Activated naive CD4-positive, alpha-beta T cell treated with anti-CD3 and anti-CD28 coated beads for 36 hours (primary cell): ENCODE measurements at regions of chr10 and their contacts with region 1.

Region 1: DNA sequence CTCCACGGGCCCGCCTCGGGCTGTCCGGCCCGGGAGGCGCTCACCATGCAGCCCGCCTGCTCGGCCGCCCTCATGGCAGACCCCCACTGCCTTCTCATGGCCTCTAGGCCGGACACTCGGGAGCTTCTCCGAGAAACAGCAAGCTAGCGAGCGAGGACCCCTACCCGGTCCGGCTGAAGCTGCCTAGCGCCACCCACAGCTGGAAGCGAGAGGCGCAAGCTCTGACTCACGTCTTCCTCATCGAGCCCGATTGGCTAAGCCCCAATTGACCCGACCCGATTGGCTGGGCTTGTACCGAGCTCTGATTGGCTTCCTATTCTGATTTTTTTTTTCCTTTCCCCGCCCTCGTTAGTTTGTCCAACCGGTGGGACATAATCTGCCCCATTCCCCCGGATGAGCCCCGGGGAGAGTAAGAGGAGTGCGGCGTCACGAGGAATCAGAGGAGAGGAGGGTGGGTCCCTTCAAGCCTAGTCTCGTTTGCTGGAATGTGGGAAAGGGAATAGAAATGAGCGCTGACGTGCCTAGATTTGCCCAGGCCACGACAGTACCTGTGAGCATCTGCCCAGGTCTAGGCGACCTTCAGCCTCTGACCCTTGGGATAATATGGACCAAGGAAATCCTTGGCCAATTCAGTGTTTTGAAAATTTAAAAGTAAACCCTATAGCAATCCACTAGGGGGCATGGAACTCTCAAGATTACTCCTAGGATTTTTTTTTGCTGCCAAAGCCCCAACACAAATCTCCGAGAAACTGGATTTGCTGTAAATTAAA is at the start of gene TYSND1:
- DNase-seq: peak; percentile 97
- H3K4me3 Mint-ChIP-seq: peak within 1 kb of the TSS; percentile 90
- H3K27ac Mint-ChIP-seq: peak within 1 kb of the TSS; percentile 93
- H3K4me1 Mint-ChIP-seq: peaks cover 33% of the 10 kb centered on the region
- H3K27me3 Mint-ChIP-seq: no peaks in the 10 kb centered on the region
- total RNA-seq, gene TYSND1: 12.5 to 13.0 TPM

Region 2: DNA sequence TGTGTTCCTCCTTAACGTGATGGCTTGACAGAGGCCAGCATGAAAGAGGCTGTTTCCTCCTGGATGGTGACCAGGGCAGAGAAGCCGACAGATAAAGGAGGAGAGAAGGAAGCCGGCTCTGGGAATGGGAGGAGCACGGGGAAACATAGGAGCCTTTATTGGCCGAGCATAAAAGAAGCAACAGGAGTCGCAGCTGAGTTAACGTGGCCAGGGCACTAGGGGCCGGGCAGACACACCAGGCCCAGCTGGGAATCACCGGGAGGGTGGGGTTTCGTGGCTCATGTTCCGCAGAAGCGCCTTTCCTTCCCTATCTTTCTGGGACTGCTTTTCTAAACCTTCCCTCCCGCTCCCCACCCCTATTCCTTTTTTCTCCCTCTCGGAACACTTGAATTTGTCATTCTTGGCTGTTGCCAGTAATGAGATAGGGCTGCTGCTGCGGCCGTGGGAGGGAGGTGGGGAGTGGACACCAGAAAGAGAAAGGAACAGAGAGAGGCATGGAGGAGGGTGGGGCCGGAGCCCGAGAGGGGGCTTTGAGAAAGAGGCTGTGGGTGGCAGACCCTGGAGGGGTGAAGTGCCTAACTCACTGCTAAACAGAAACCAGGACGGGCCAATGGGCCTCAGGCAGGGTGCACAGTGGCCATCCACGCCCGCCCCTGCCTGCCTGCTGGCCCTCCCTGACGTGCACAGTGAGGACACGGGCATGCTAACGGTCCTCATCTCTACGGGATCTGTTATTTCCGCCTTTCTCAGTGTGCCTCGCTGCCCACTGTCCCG is 279.8 kb before region 1 on chr10:
- CTCF ChIA-PET with region 1: no interaction called
- intact Hi-C with region 1: no loop called
- DNase-seq: no peak
- H3K4me3 Mint-ChIP-seq: no peak overlapping the region
- H3K27ac Mint-ChIP-seq: no peak overlapping the region
- H3K4me1 Mint-ChIP-seq: no peaks in the 10 kb centered on the region
- H3K27me3 Mint-ChIP-seq: no peaks in the 10 kb centered on the region

Region 3: DNA sequence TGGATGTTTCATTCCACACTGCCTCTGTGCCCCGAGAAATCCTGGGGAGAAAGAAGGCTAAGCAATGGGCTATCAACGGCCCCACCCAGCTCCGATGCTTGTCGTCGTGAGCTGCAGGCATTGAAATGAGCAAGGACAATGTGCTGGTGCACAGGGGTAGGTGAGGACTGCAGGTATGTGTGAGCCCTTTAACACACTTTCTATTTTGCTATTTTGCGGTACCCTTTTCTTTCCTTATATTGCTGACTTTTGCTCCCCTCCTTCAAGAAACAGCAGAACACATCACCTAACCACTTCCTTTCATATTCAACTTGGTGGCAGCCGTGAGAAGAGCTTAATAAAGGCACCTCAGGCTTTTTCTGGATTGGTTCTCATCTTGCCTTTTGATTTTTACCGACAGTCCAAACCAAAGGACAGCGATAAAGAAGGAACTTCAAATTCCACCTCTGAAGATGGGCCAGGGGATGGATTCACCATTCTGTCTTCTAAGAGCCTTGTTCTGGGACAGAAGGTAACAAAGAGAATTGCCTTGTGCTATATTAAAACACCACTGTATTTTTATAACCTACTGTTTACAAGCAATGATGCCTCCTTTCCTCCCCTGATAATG is 53.2 kb before region 1 on chr10:
- CTCF ChIA-PET with region 1: interaction called, 19 read pairs
- intact Hi-C with region 1: loop called (anchors 1 kb)
- DNase-seq: peak; percentile 52
- H3K4me3 Mint-ChIP-seq: peak overlapping the region; percentile 74
- H3K27ac Mint-ChIP-seq: peak overlapping the region; percentile 73
- H3K4me1 Mint-ChIP-seq: peaks cover 32% of the 10 kb centered on the region
- H3K27me3 Mint-ChIP-seq: no peaks in the 10 kb centered on the region

Region 4: GRCh38 chr10:70130878-70131559 is 15.7 kb before region 1 on chr10:
- CTCF ChIA-PET with region 1: interaction called, 12 read pairs
- intact Hi-C with region 1: no loop called
- DNase-seq: no peak
- H3K4me3 Mint-ChIP-seq: no peak overlapping the region
- H3K27ac Mint-ChIP-seq: no peak overlapping the region
- H3K4me1 Mint-ChIP-seq: peaks cover 15% of the 10 kb centered on the region
- H3K27me3 Mint-ChIP-seq: peaks cover 3% of the 10 kb centered on the region

Region 5: GRCh38 chr10:70197235-70197945 is 50.7 kb after region 1 on chr10:
- CTCF ChIA-PET with region 1: interaction called, 8 read pairs
- intact Hi-C with region 1: loop called (anchors 2 kb)
- DNase-seq: no peak
- H3K4me3 Mint-ChIP-seq: no peak overlapping the region
- H3K27ac Mint-ChIP-seq: no peak overlapping the region
- H3K4me1 Mint-ChIP-seq: peaks cover 15% of the 10 kb centered on the region
- H3K27me3 Mint-ChIP-seq: no peaks in the 10 kb centered on the region

Region 6: GRCh38 chr10:70272925-70273316 is 126.2 kb after region 1 on chr10:
- CTCF ChIA-PET with region 1: interaction called, 5 read pairs
- intact Hi-C with region 1: loop called (anchors 1 kb)
- DNase-seq: peak; percentile 35
- H3K4me3 Mint-ChIP-seq: no peak overlapping the region
- H3K27ac Mint-ChIP-seq: peak overlapping the region; percentile 56
- H3K4me1 Mint-ChIP-seq: peaks cover 22% of the 10 kb centered on the region
- H3K27me3 Mint-ChIP-seq: no peaks in the 10 kb centered on the region

Region 7: GRCh38 chr10:70404036-70404786 is 257.5 kb after region 1 on chr10 and contains the start of gene EIF4EBP2:
- CTCF ChIA-PET with region 1: no interaction called
- intact Hi-C with region 1: loop called (anchors 1 kb)
- DNase-seq: peak; percentile 99
- H3K4me3 Mint-ChIP-seq: peak within 1 kb of the TSS; percentile 98
- H3K27ac Mint-ChIP-seq: peak within 1 kb of the TSS; percentile 90
- H3K4me1 Mint-ChIP-seq: peaks cover 37% of the 10 kb centered on the region
- H3K27me3 Mint-ChIP-seq: no peaks in the 10 kb centered on the region
- total RNA-seq, gene EIF4EBP2: 20.0 to 21.0 TPM

Region 8: DNA sequence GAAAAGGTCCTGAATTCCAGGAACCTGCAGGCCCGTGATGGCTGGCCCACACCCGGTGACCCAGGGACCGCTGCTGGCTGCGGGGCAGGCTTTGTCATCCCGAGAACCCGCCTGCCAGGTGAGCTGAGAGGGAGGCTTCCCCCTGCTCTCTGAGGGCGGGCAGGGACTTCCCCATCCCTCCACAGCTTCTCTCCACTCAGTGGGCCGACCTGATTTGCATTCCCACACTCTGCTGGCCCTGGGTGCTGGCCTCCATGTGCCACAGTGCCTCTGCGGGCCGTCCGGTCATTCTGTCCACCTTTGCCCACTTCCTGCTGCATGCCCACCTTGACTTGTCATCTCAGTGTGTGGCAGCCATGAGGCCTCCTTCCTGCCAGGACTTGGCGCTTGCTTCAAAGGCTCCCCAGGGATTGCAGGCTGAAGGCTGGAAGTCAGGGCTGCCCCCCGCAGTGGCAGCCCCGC is 367.2 kb after region 1 on chr10:
- CTCF ChIA-PET with region 1: no interaction called
- intact Hi-C with region 1: no loop called
- DNase-seq: peak; percentile 42
- H3K4me3 Mint-ChIP-seq: no peak overlapping the region
- H3K27ac Mint-ChIP-seq: no peak overlapping the region
- H3K4me1 Mint-ChIP-seq: peaks cover 2% of the 10 kb centered on the region
- H3K27me3 Mint-ChIP-seq: no peaks in the 10 kb centered on the region

Region 9: GRCh38 chr10:70634011-70634410 is 487.3 kb after region 1 on chr10:
- CTCF ChIA-PET with region 1: no interaction called
- intact Hi-C with region 1: no loop called
- DNase-seq: no peak
- H3K4me3 Mint-ChIP-seq: no peak overlapping the region
- H3K27ac Mint-ChIP-seq: no peak overlapping the region
- H3K4me1 Mint-ChIP-seq: no peaks in the 10 kb centered on the region
- H3K27me3 Mint-ChIP-seq: no peaks in the 10 kb centered on the region